Psoas muscle (tissue), 8 donors: ENCODE measurements at regions of chr2 and their contacts with region 1.

Region 1: DNA sequence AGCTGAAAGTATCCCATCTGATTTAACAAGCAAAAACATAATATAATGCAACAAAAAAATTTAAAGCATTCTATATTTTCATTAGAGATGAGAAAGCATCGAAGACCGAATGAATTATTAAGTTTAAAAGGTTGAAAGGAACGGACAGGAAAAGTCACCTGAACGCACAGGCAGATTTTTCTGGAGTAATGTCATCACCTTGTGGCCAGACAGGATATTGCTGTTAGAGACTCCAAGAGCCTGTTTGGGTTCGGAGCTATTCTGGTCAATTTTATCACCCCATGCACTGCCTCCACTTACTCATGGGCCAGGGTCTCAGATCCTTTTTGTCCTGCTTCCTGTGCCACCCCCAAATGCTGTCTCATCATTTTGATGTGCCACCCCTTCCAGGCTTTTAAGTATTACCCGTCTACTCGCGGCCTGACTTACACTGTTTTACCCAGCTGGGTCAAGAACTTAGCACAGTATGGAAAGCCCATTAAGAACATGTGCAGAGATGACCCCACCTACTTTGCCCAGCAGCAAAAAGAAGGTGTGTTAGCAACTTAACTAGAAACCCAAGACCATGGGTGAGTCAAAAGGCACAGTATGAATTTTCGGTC is 27.3 kb downstream of the GKN2 start:
- DNase-seq: no peak
- ATAC-seq: peak; percentile 46 to 73 (median 62)
- H3K4me3 ChIP-seq: no peak overlapping the region
- H3K27ac ChIP-seq: no peak overlapping the region
- H3K4me1 ChIP-seq: no peaks in the 10 kb centered on the region
- H3K27me3 ChIP-seq: no peaks in the 10 kb centered on the region
- CTCF ChIP-seq: peak; percentile 85

Region 2: DNA sequence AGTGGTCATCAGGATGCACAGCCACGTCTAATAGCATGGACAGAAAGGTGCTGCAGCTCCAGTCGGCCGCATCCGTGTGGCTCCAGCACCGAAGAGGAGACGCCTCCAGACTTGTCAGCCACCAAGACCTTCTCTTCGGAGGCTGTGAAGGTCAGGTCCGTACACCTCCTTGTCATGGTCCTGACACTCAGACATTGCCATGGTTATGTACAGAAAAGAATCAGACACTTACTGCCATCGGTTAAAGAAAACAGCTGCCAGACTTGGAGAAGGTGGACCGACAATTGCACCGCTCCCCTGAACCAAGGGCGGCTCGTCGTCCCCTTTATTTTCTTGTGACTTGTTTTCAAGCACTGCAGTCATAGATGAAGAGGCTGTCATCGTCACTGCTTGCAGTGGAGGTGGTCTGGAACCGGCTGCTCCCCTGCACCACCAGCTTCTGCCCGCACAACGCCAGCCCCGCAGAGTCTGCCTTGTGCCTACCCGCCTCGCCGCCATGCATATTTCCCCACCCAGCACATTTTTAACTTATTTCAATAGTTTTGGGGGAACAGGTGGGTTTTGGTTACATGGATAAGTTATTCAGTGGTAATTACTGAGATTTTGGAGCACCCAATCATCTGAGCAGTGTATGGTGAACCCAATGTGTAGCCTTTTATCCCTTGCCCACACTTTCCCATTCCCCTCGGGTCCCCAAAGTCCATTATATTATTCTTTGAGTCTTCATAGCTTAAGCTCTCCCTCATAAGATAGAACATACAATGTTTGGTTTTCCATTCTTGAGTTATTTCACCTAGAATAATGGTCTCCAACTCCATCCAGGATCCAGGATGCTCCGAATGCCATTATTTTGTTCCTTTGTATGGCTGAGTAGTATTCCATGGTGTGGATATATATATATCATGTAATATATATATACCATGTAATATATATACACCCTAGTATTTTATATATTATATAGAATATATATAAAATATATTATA is 476.4 kb before region 1 on chr2:
- intact Hi-C with region 1: loop called in 1 of 2 experiments (anchors 10 kb)
- DNase-seq: peak in 1 of 2 donors; percentile 61
- ATAC-seq: peak; percentile 42 to 68 (median 50)
- H3K4me3 ChIP-seq: no peak overlapping the region
- H3K27ac ChIP-seq: no peak overlapping the region
- H3K4me1 ChIP-seq: no peaks in the 10 kb centered on the region
- H3K27me3 ChIP-seq: no peaks in the 10 kb centered on the region
- CTCF ChIP-seq: no peak

Region 3: DNA sequence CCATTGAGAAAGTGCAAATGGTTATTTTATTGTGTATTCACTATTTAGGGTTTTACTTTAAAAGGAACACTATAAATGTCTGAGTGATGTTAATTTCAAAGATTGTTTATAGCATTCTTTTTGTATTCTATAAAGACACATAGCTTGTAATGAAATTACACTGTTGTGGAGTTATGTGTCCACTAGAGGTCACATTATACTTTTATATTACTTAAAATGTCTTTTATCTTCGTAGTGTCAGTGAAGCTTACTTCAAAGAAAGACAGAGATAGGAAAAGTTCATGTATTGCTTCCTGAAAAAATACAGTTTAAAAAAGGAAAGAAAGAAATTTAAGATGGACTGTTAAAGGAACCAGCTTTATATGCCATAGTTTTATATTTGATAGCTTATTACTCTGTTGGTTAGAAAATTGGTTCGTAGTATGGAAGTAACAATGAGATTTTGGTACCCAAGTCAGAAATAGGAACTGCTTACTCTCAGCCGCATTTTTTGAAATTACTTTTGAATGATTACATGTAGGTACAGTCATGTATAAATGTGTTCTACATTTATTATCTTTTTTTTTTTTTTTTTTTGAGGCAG is 437.5 kb before region 1 on chr2:
- intact Hi-C with region 1: loop called in 1 of 2 experiments (anchors 10 kb)
- DNase-seq: no peak
- ATAC-seq: no peak
- H3K4me3 ChIP-seq: no peak overlapping the region
- H3K27ac ChIP-seq: no peak overlapping the region
- H3K4me1 ChIP-seq: peaks cover 4% of the 10 kb centered on the region
- H3K27me3 ChIP-seq: no peaks in the 10 kb centered on the region
- CTCF ChIP-seq: peak; percentile 49

Region 4: GRCh38 chr2:68709421-68709911 is 215.9 kb before region 1 on chr2:
- intact Hi-C with region 1: loop called in 1 of 2 experiments (anchors 5 kb)
- DNase-seq: no peak
- ATAC-seq: peak in 1 of 4 donors; percentile 53
- H3K4me3 ChIP-seq: no peak overlapping the region
- H3K27ac ChIP-seq: no peak overlapping the region
- H3K4me1 ChIP-seq: no peaks in the 10 kb centered on the region
- H3K27me3 ChIP-seq: no peaks in the 10 kb centered on the region
- CTCF ChIP-seq: peak; percentile 52

Region 5: GRCh38 chr2:68751397-68752339 is 173.7 kb before region 1 on chr2:
- intact Hi-C with region 1: loop called (anchors 2 to 5 kb)
- DNase-seq: peak; percentile 86 to 92
- ATAC-seq: peak; percentile 83 to 99 (median 92)
- H3K4me3 ChIP-seq: peak overlapping the region; percentile 31
- H3K27ac ChIP-seq: no peak overlapping the region
- H3K4me1 ChIP-seq: no peaks in the 10 kb centered on the region
- H3K27me3 ChIP-seq: no peaks in the 10 kb centered on the region
- CTCF ChIP-seq: peak; percentile 89